HEK293 (cell line): ENCODE measurements at regions of chr12 and their contacts with region 1.

Region 1: GRCh38 chr12:52156736-52157565 is 34.9 kb downstream of the KRT80 start:
- H3K4me3 ChIP-seq: no peak overlapping the region
- H3K27ac ChIP-seq: no peak overlapping the region
- H3K4me1 ChIP-seq: no peaks in the 10 kb centered on the region
- CTCF ChIP-seq: peak; percentile 96

Region 2: GRCh38 chr12:51496895-51497294 is 660.1 kb before region 1 on chr12:
- CTCF ChIA-PET with region 1: no interaction called
- POLR2A ChIA-PET with region 1: no interaction called
- H3K4me3 ChIP-seq: no peak overlapping the region
- H3K27ac ChIP-seq: no peak overlapping the region
- H3K4me1 ChIP-seq: no peaks in the 10 kb centered on the region
- CTCF ChIP-seq: no peak

Region 3: DNA sequence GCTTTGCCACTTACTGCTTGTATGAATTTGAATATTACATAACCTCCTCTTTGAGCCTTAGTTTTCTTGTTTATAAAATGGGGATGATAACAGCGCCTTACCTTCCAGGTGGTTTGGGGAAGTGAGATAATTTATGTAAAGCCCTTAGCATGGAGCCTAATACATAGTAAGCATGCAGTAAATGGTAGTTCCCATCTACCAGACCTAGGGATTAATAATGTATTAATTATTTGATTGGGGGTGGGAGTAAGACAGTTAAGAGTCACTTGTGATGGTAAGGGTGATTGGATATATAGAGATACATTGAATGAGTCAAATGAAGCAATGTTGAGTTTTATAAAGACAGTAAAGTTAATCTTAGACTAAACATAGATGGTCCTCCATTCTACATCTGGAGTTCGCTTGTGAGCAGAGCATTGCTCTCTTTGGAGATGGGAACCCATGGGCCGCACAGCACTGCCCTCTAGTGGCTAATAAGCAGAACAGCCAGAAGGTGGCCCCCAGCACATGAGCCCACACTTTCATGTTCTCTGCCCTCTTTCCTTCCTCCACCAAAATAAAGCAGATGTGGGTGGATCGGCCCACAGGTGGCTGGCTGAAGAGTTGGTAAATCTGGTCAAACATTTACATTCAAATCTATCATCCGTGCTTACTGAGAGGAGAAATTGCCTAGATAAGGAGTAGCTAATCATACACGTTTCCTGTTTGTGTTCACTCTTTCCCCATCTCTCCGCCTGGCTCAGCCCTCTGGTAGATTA is 176.7 kb before region 1 on chr12:
- CTCF ChIA-PET with region 1: no interaction called
- POLR2A ChIA-PET with region 1: no interaction called
- H3K4me3 ChIP-seq: no peak overlapping the region
- H3K27ac ChIP-seq: no peak overlapping the region
- H3K4me1 ChIP-seq: no peaks in the 10 kb centered on the region
- CTCF ChIP-seq: peak; percentile 75

Region 4: GRCh38 chr12:52192173-52192791 is 35.3 kb after region 1 on chr12:
- CTCF ChIA-PET with region 1: interaction called, 10 read pairs
- POLR2A ChIA-PET with region 1: no interaction called
- H3K4me3 ChIP-seq: no peak overlapping the region; the same call in 1 of the 2 replicates
- H3K27ac ChIP-seq: no peak overlapping the region
- H3K4me1 ChIP-seq: peaks cover 2% of the 10 kb centered on the region; the same call in 1 of the 2 replicates
- CTCF ChIP-seq: no peak

Region 5: DNA sequence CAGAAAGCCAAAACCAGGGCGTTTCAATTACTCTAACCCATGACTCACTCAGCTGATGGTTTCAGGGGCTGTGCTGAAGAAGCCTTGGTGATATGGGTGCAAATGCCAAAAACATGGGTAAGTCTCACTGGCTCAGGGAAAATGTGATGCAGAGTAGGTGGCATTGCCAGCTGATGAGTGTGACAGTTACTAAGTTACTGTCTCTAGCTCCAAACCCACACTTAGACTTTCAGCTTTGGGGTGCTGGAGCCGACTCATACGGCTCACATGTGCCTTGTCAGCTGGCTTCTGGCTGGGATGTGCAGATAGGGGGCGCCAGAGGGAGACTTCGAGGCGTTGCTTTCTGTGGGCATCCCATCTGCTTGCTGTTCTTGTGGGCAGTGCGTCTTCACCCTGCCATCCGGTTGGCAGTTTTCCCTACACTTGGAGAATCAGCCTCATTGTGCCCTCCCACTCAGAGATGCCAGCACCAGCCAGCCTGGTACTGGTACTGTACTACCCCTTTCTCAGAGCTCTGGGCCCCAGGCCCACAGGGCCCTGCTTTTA is 65.0 kb after region 1 on chr12:
- CTCF ChIA-PET with region 1: interaction called, 15 read pairs
- POLR2A ChIA-PET with region 1: no interaction called
- H3K4me3 ChIP-seq: no peak overlapping the region
- H3K27ac ChIP-seq: no peak overlapping the region
- H3K4me1 ChIP-seq: no peaks in the 10 kb centered on the region
- CTCF ChIP-seq: peak; percentile 60

Region 6: DNA sequence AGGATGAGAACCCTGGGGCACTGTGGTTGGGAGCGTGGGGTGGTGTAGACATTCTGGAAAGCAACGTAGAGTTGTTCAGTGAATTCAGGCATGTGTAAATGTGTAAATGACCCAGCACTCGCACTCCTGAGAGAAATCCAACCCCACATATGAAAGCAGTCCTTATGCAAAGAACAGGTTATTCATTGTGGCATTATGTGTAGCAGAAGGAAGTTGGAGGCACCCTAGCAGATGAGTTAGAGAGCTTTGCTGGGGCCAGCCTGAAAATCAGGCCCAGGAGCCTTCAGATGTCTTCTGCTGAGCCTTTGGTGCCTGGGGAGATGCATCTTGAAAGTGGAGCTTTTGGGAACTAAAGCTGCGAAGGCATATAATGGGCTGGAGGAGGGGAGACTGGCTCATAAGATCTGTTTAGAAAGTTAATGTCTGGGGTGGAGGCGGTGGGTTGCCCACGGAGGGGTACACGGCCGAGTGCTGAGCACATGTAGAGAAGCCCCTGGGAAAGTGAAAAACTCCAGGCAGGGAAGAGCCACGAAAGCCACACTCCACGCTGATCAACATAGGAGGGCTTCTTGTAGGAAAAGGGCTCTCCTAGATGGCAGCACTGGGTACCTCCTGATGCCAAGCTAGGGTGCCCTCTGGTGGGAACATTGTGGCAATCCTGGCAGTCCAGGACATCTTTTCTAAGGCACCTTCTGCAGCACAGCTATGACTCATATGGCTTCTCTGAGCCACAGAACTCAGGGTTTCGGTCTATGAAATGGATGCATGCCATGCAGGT is 170.3 kb after region 1 on chr12:
- CTCF ChIA-PET with region 1: interaction called, 104 read pairs
- POLR2A ChIA-PET with region 1: interaction called, 4 read pairs
- H3K4me3 ChIP-seq: no peak overlapping the region
- H3K27ac ChIP-seq: no peak overlapping the region
- H3K4me1 ChIP-seq: no peaks in the 10 kb centered on the region
- CTCF ChIP-seq: peak; percentile 97

Region 7: DNA sequence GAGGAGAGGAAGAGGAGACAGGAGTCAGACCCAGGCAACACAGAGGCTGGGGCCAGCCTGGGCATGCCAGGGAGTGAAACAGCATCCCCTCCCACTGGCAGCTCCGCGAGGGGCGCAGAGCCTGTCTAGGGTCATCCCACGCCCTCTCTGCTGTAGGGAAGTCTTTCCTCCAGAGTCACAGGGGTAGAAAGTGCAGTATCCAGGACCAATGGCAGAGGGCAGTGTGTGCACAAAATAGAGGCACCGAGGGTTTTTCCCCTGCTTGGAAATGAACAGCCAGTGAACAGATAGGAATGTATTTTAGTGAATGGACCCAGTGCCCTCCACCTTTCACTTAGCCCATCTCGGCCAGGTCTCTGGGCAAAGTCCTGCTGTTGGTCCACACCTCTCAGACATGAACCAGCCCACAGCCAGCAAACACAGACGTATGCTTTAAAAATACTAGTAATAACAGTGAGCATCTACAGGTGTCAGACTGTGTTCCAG is 426.1 kb after region 1 on chr12:
- CTCF ChIA-PET with region 1: interaction called, 10 read pairs
- POLR2A ChIA-PET with region 1: no interaction called
- H3K4me3 ChIP-seq: no peak overlapping the region
- H3K27ac ChIP-seq: no peak overlapping the region
- H3K4me1 ChIP-seq: no peaks in the 10 kb centered on the region
- CTCF ChIP-seq: peak; percentile 68